Left colon (tissue), 2 donors: ENCODE measurements at regions of chr2 and their contacts with region 1.

Region 1: DNA sequence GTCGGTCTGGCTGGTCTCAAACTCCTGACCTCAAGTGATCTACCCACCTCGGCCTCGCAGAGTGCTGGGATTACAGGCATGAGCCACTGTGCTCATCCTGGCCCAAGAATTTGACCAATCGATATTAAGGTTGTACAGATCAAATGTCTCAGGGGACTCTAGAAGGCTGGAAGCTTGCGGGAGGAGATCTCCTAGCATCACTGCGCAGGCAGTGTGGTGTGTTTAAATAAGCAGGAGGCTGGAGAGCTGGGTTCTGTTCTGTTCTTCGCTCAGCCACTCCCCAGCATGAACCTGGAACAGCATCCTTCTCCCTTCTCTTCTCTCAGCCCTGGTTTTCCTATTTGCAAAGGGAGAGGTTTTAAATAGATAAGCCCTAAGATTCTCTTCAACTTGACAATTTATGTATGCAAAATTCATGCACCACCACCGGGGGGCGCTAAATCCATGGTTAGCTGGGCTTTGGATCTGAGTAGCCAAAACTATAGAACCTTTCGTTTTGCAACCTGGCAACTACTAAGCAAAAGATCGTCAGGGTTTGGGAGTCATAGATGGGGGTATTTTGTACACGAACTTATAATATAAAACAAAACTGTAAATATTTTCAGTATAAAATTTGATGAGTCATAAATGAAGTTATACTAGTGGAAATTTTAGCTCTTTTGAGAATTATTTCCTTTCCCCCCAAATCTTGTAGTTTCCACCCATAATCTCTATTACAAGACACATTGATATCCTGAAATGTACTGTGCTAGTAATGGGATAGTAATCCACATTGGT is 60.6 kb downstream of the SLC16A14 start:
- DNase-seq: peak; percentile 62 to 80
- ATAC-seq: peak; percentile 77

Region 2: GRCh38 chr2:229783108-229783721 is 224.9 kb before region 1 on chr2:
- intact Hi-C with region 1: no loop called
- DNase-seq: no peak
- ATAC-seq: no peak

Region 3: GRCh38 chr2:230153390-230153976 is 145.4 kb after region 1 on chr2:
- intact Hi-C with region 1: loop called in 1 of 2 experiments (anchors 10 kb)
- DNase-seq: no peak
- ATAC-seq: no peak

Region 4: GRCh38 chr2:230160112-230160660 is 152.1 kb after region 1 on chr2:
- intact Hi-C with region 1: loop called (anchors 5 to 10 kb)
- DNase-seq: peak in 1 of 2 donors; percentile 57
- ATAC-seq: peak; percentile 73

Region 5: GRCh38 chr2:230614913-230615332 is 606.8 kb after region 1 on chr2:
- intact Hi-C with region 1: loop called (anchors 10 kb)
- DNase-seq: peak; percentile 43 to 70
- ATAC-seq: no peak